Mammary epithelial cell (primary cell): ENCODE measurements at regions of chr12 and their contacts with region 1.

Region 1: GRCh38 chr12:56751712-56752598 is at the start of gene PRIM1:
- DNase-seq: peak; percentile 78
- H3K4me3 ChIP-seq: peak within 1 kb of the TSS; percentile 86 to 96 (median 89)
- H3K27ac ChIP-seq: peak within 1 kb of the TSS; percentile 70
- H3K4me1 ChIP-seq: no peaks in the 10 kb centered on the region
- H3K27me3 ChIP-seq: no peaks in the 10 kb centered on the region
- CTCF ChIP-seq: peak in 1 of 2 donors; percentile 23
- total RNA-seq, gene PRIM1: 5.0 to 16.1 TPM

Region 2: DNA sequence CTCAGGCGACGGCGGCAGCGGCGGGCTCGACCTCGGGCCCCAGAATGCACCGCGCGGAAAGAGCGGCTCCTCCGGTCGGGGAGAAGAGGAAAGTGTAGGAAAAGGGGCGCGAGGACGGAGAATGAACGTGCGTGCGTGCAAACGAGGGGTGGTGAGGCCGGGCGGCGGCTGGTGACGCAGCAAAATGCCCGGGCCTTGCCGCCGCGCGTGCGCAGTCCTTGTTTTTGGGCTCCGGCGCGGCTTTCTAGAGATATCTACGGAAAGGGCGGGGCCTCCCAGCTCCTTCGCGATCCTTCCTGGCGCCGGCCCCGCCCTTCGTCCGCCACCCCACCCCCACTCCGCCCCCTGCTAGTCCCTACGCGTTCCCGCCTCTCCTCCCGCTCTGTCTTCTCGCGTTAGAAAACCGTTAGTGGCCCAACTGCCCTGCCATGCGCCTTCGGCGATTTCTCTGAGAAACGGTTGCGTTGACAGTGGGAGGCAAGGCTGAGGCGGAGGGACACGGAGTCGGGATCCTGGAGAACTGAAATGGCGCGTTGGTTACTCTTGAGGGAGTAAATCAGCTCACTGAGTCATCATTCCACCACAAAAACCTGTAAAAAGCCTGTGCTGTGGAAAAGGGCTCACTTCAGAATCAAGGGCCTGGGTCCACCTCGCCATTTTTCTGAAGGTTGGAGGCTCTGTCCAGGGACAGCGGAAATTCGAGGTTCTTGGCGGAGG is 63.7 kb before region 1 on chr12 and contains the start of gene PTGES3:
- CTCF ChIA-PET with region 1: interaction called, 3 read pairs
- dilution Hi-C with region 1: no loop called
- in situ Hi-C with region 1: no loop called
- intact Hi-C with region 1: loop called (anchors 2 kb)
- DNase-seq: peak; percentile 98
- H3K4me3 ChIP-seq: peak within 1 kb of the TSS; percentile 64 to 94 (median 78)
- H3K27ac ChIP-seq: peak within 1 kb of the TSS; percentile 89
- H3K4me1 ChIP-seq: peaks cover 4% of the 10 kb centered on the region
- H3K27me3 ChIP-seq: no peaks in the 10 kb centered on the region
- CTCF ChIP-seq: peak in 1 of 2 donors; percentile 4
- total RNA-seq, gene PTGES3: 63.5 to 197 TPM

Region 3: DNA sequence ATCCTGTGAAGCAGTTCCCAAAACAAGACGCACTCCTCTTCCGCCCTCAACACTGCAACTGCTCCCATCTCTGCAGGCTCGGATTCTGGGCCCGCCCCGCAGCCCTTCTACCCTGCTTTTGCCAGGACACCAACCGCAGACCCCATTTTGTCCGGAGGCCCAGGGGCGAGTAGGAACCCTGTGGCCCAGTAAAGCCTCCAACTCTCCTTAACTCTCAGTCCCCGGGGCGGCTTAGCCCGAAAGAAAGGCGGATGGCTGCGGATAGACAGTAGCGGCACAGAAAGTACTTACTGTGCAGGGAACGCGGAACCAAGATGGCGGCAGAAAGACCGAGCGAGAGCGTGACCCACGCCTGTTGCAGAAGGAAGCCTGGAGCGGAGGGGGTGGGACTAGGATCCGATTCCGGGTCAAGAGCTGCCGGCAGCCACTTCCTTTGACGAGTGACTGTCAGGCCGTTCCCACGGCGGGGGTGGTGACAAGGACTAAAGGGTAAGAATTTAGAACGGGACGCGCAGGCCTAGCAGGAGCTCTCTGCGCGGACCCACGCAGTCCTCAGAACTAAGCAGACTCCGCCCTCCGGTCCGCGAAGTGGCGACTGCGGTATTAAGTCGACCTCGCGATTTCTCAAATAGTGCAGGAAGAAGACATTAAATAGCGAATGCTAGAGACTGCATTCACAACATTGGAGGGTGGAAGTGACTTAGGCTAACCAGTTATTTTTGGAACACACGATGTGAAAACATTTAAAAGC is 26.8 kb before region 1 on chr12 and contains the start of gene NACA:
- CTCF ChIA-PET with region 1: no interaction called
- dilution Hi-C with region 1: no loop called
- in situ Hi-C with region 1: no loop called
- intact Hi-C with region 1: loop called (anchors 1 kb)
- DNase-seq: peak; percentile 96
- H3K4me3 ChIP-seq: peak within 1 kb of the TSS; percentile 74 to 99 (median 96)
- H3K27ac ChIP-seq: peak within 1 kb of the TSS; percentile 94
- H3K4me1 ChIP-seq: peaks cover 28% of the 10 kb centered on the region
- H3K27me3 ChIP-seq: no peaks in the 10 kb centered on the region
- CTCF ChIP-seq: no peak
- total RNA-seq, gene NACA: 727 to 735 TPM

Region 4: GRCh38 chr12:56987551-56988053 is 235.6 kb after region 1 on chr12:
- CTCF ChIA-PET with region 1: interaction called, 13 read pairs
- dilution Hi-C with region 1: loop called (anchors 5 kb)
- in situ Hi-C with region 1: loop called in 1 of 2 experiments (anchors 5 kb)
- intact Hi-C with region 1: loop called (anchors 1 kb)
- DNase-seq: peak; percentile 58
- H3K4me3 ChIP-seq: no peak overlapping the region
- H3K27ac ChIP-seq: no peak overlapping the region
- H3K4me1 ChIP-seq: peaks cover 18% of the 10 kb centered on the region
- H3K27me3 ChIP-seq: no peaks in the 10 kb centered on the region
- CTCF ChIP-seq: peak; percentile 94 to 95

Region 5: GRCh38 chr12:57063991-57064685 is 312.2 kb after region 1 on chr12:
- CTCF ChIA-PET with region 1: no interaction called
- dilution Hi-C with region 1: loop called (anchors 10 kb)
- in situ Hi-C with region 1: no loop called
- intact Hi-C with region 1: loop called (anchors 1 kb)
- DNase-seq: peak; percentile 21
- H3K4me3 ChIP-seq: no peak overlapping the region
- H3K27ac ChIP-seq: no peak overlapping the region
- H3K4me1 ChIP-seq: no peaks in the 10 kb centered on the region
- H3K27me3 ChIP-seq: no peaks in the 10 kb centered on the region
- CTCF ChIP-seq: no peak

Region 6: DNA sequence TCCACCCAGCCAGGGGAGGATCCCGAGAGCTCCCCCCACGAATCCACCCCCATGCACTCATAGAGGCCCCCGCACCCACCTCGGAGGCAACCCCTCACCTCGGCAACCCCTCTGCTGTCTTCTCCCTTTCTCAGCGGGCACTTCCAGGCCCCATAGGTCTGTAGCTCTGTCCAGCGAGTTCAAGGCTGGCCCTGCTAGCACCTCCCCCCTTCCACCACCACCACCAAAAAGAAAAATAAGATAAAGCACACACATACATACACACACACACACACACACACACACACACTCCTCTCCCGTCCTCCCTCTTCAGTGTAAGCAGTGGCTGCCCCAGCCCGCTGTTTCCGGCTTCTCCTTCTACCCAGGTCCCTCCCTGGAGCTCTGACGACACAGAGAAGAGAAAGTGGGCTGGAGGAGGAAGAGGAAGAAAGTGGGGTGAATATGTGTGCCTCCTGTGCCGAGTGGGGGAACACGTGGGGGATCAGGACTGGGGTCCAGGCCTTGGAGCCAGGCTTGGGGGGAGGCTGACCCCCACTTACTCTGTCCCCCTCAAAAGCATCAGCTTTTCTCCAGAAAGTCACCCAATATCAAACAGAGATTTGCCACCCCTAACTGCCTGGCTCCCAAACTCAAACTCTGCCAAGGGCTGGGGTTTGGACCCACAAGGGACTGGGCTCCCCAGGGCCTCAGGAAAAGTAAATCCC is 359.2 kb after region 1 on chr12 and contains the start of gene STAT6:
- CTCF ChIA-PET with region 1: no interaction called
- dilution Hi-C with region 1: no loop called
- in situ Hi-C with region 1: no loop called
- intact Hi-C with region 1: loop called (anchors 2 kb)
- DNase-seq: peak; percentile 82
- H3K4me3 ChIP-seq: peak within 1 kb of the TSS; percentile 62 to 68 (median 67)
- H3K27ac ChIP-seq: peak within 1 kb of the TSS; percentile 95
- H3K4me1 ChIP-seq: peaks cover 31% of the 10 kb centered on the region
- H3K27me3 ChIP-seq: no peaks in the 10 kb centered on the region
- CTCF ChIP-seq: no peak
- total RNA-seq, gene STAT6: 65.3 to 150 TPM